CD8-positive, alpha-beta T cell (primary cell): ENCODE measurements at regions of chr7 and their contacts with region 1.

Region 1: GRCh38 chr7:94449148-94449725 is 54.5 kb downstream of the COL1A2 start:
- DNase-seq: peak in 2 of 9 experiments; percentile 34 to 52
- ATAC-seq: peak; percentile 36
- H3K4me3 ChIP-seq: no peak overlapping the region
- H3K4me3 Mint-ChIP-seq: no peak overlapping the region
- H3K27ac ChIP-seq: no peak overlapping the region
- H3K27ac Mint-ChIP-seq: no peak overlapping the region
- H3K4me1 ChIP-seq: no peaks in the 10 kb centered on the region
- H3K4me1 Mint-ChIP-seq: no peaks in the 10 kb centered on the region
- H3K27me3 ChIP-seq: no peaks in the 10 kb centered on the region
- H3K27me3 Mint-ChIP-seq: peaks cover 10% of the 10 kb centered on the region
- CTCF ChIP-seq: peak; percentile 73

Region 2: GRCh38 chr7:94436018-94436604 is 13.1 kb before region 1 on chr7:
- CTCF ChIA-PET with region 1: interaction called, 14 read pairs
- POLR2A ChIA-PET with region 1: no interaction called
- intact Hi-C with region 1: no loop called
- DNase-seq: peak in 8 of 9 experiments; percentile 10 to 67 (median 50)
- ATAC-seq: peak; percentile 63
- H3K4me3 ChIP-seq: no peak overlapping the region
- H3K4me3 Mint-ChIP-seq: no peak overlapping the region
- H3K27ac ChIP-seq: no peak overlapping the region
- H3K27ac Mint-ChIP-seq: no peak overlapping the region
- H3K4me1 ChIP-seq: no peaks in the 10 kb centered on the region
- H3K4me1 Mint-ChIP-seq: no peaks in the 10 kb centered on the region
- H3K27me3 ChIP-seq: peaks cover 0 to 4% of the 10 kb centered on the region in 2 experiments
- H3K27me3 Mint-ChIP-seq: peaks cover 10% of the 10 kb centered on the region
- CTCF ChIP-seq: peak; percentile 85

Region 3: DNA sequence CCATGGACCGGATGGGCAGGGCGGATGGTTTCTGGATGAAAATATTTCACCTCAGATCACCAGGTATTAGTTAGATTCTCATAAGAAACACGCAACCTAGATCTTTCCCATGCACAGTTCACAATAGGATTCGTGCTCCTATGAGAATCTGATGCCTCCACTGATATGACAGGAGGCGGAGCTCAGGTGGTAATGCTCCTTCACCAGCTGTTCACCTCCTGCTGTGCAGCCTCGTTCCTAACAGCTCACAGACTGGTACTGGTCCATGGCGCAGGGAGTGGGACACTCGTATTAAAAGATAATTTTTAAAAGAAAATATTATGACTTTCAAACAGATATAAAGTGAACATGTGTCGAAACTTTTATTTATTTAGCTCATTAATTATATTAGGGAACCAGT is 53.9 kb after region 1 on chr7:
- CTCF ChIA-PET with region 1: no interaction called
- POLR2A ChIA-PET with region 1: no interaction called
- intact Hi-C with region 1: no loop called
- DNase-seq: no peak
- ATAC-seq: no peak
- H3K4me3 ChIP-seq: no peak overlapping the region
- H3K4me3 Mint-ChIP-seq: no peak overlapping the region
- H3K27ac ChIP-seq: no peak overlapping the region
- H3K27ac Mint-ChIP-seq: no peak overlapping the region
- H3K4me1 ChIP-seq: no peaks in the 10 kb centered on the region
- H3K4me1 Mint-ChIP-seq: no peaks in the 10 kb centered on the region
- H3K27me3 ChIP-seq: no peaks in the 10 kb centered on the region
- H3K27me3 Mint-ChIP-seq: peaks cover 10% of the 10 kb centered on the region
- CTCF ChIP-seq: no peak

Region 4: GRCh38 chr7:95246831-95247370 is 797.7 kb after region 1 on chr7:
- CTCF ChIA-PET with region 1: interaction called, 7 read pairs
- POLR2A ChIA-PET with region 1: no interaction called
- intact Hi-C with region 1: loop called in 1 of 2 experiments (anchors 5 kb)
- DNase-seq: peak in 3 of 9 experiments; percentile 15 to 42 (median 40)
- ATAC-seq: no peak
- H3K4me3 ChIP-seq: no peak overlapping the region
- H3K4me3 Mint-ChIP-seq: no peak overlapping the region
- H3K27ac ChIP-seq: no peak overlapping the region
- H3K27ac Mint-ChIP-seq: no peak overlapping the region
- H3K4me1 ChIP-seq: no peaks in the 10 kb centered on the region
- H3K4me1 Mint-ChIP-seq: no peaks in the 10 kb centered on the region
- H3K27me3 ChIP-seq: no peaks in the 10 kb centered on the region
- H3K27me3 Mint-ChIP-seq: no peaks in the 10 kb centered on the region
- CTCF ChIP-seq: no peak

Region 5: DNA sequence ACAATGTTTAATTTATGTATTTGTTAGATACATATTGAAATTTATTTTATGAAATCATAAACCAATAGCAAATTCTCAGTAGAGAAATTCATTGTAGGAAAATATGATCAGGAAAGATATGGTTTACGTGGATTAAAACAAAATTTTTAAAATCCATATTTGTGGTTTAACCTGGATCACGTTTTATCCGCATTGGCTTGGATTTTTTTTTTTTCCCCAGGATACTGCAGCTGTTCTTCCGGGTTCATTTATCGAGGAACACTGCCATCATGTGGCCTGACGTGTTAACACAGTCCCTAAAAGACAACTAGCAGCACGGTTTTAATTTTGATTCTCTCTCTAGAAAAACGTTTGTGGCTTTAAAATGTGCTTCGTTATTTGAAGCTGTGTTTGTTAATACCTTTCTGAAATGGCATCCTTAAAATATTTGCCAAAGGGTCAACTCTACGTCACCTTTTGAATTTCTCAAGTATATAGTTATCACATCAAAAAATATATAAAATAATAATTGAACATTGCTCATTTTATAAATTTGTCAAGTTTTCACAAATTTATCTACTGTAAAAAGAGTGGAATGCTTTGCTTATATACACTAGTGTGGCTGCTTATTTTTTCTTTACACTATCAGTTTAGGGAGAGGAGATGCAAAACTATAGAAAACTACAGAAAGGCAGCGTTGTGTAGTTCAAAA is 1027.8 kb after region 1 on chr7:
- CTCF ChIA-PET with region 1: interaction called, 88 read pairs
- POLR2A ChIA-PET with region 1: interaction called, 3 read pairs
- intact Hi-C with region 1: loop called (anchors 1 kb)
- DNase-seq: peak; percentile 8 to 77 (median 49)
- ATAC-seq: peak; percentile 71
- H3K4me3 ChIP-seq: no peak overlapping the region
- H3K4me3 Mint-ChIP-seq: peak overlapping the region; percentile 11
- H3K27ac ChIP-seq: no peak overlapping the region
- H3K27ac Mint-ChIP-seq: no peak overlapping the region
- H3K4me1 ChIP-seq: no peaks in the 10 kb centered on the region
- H3K4me1 Mint-ChIP-seq: peaks cover 2% of the 10 kb centered on the region
- H3K27me3 ChIP-seq: no peaks in the 10 kb centered on the region
- H3K27me3 Mint-ChIP-seq: no peaks in the 10 kb centered on the region
- CTCF ChIP-seq: peak; percentile 96

Region 6: DNA sequence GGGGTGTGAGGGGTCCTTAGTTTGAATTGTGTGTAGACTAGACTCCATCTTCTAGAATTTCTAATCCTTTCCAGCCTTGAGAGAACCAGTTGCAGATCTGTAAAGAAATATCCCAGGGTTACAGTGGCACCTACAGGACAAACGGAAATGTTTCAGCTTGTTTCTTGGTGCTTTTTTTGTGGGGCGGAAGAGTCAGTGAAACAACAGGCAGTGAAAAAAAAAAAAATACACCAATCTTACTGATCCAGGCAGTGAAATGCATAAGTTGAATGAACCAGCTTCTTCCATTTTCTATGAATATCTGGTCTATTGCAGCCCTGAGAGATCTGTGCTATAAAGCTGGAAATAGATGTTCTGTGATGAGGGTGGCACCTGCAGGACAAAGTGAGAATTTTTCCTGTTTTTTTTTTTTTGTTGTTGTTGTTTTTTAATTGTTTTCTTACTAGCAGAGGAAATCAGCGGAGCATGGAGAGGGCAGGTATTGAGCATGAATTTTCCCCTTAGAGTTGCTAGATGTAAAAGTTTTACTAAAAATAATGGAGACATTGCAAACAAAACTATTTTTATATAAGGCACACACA is 1241.2 kb after region 1 on chr7:
- CTCF ChIA-PET with region 1: no interaction called
- POLR2A ChIA-PET with region 1: no interaction called
- intact Hi-C with region 1: loop called in 1 of 2 experiments (anchors 5 kb)
- DNase-seq: peak in 2 of 9 experiments; percentile 7 to 17
- ATAC-seq: peak; percentile 23
- H3K4me3 ChIP-seq: no peak overlapping the region
- H3K4me3 Mint-ChIP-seq: no peak overlapping the region
- H3K27ac ChIP-seq: no peak overlapping the region
- H3K27ac Mint-ChIP-seq: no peak overlapping the region
- H3K4me1 ChIP-seq: no peaks in the 10 kb centered on the region
- H3K4me1 Mint-ChIP-seq: peaks cover 2% of the 10 kb centered on the region
- H3K27me3 ChIP-seq: no peaks in the 10 kb centered on the region
- H3K27me3 Mint-ChIP-seq: peaks cover 2% of the 10 kb centered on the region
- CTCF ChIP-seq: peak; percentile 20